BJ (cell line): ENCODE measurements at regions of chr18 and their contacts with region 1.

Region 1: GRCh38 chr18:22639026-22639463 is 221.3 kb upstream of the CTAGE1 start:
- DNase-seq: peak; percentile 68
- H3K4me3 ChIP-seq: no peak overlapping the region
- H3K27me3 ChIP-seq: no peaks in the 10 kb centered on the region
- CTCF ChIP-seq: no peak

Region 2: DNA sequence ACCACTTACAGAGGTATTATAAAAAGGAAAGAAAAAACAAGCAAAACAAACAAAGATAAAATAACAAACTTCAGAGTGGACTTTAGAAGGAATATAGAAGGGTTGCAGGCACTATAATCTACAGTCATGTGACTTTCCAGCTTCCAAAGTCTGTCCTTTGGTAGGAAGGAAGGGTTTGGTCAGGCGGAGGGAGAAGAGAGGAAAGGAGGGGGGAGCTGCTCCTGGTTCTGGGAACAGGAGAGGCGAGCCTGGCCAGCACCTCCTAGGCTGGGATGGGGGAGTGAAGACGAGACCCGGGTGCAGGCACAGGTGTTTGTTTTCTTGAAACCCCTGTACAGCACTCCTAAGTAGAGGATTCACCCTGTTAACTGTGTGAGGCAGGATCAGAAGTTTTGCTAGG is 523.5 kb before region 1 on chr18:
- CTCF ChIA-PET with region 1: no interaction called
- POLR2A ChIA-PET with region 1: interaction called, 11 read pairs
- DNase-seq: no peak
- H3K4me3 ChIP-seq: no peak overlapping the region
- H3K27me3 ChIP-seq: no peaks in the 10 kb centered on the region; the same call in 1 of the 2 replicates
- CTCF ChIP-seq: no peak

Region 3: GRCh38 chr18:22694954-22695353 is 55.9 kb after region 1 on chr18:
- CTCF ChIA-PET with region 1: no interaction called
- POLR2A ChIA-PET with region 1: interaction called, 17 read pairs
- DNase-seq: peak; percentile 82
- H3K4me3 ChIP-seq: no peak overlapping the region
- H3K27me3 ChIP-seq: no peaks in the 10 kb centered on the region
- CTCF ChIP-seq: no peak